ENCODE measurements at regions of chr9 and their contacts with region 1.

Region 1: DNA sequence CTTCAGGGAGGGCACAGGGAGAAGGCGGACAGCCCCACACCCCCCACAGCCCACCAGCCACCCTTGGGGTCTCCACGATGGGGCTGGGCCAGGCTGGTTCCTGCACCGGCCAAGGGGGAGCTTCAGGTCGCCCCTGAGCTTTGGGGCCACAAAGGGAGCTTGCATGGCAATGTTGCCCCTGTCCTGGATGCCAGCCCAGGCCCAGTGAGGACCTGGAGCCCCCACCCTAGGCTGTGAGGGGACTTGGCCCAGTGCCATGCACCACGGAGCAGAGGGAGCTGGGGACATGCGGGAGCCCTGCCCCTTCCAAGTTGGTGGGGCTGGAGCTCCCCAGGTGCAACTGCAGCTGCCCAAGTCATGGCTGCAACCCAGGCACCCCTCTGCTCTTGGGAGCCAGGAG is 18.4 kb downstream of the TMEM38B start:
- DNase-seq: no peak
- ATAC-seq: no peak
- H3K4me3 ChIP-seq: no peak overlapping the region
- H3K4me3 Mint-ChIP-seq: no peak overlapping the region
- H3K27ac ChIP-seq: no peak overlapping the region
- H3K27ac Mint-ChIP-seq: no peak overlapping the region
- H3K4me1 ChIP-seq: no peaks in the 10 kb centered on the region
- H3K4me1 Mint-ChIP-seq: peaks cover 11% of the 10 kb centered on the region
- H3K27me3 ChIP-seq: no peaks in the 10 kb centered on the region
- H3K27me3 Mint-ChIP-seq: no peaks in the 10 kb centered on the region
- CTCF ChIP-seq: no peak

Region 2: GRCh38 chr9:105432247-105432842 is 280.4 kb before region 1 on chr9:
- CTCF ChIA-PET with region 1: no interaction called
- POLR2A ChIA-PET with region 1: no interaction called
- intact Hi-C with region 1: loop called in 1 of 2 experiments (anchors 5 kb)
- DNase-seq: no peak
- ATAC-seq: no peak
- H3K4me3 ChIP-seq: no peak overlapping the region
- H3K4me3 Mint-ChIP-seq: no peak overlapping the region
- H3K27ac ChIP-seq: no peak overlapping the region
- H3K27ac Mint-ChIP-seq: no peak overlapping the region
- H3K4me1 ChIP-seq: no peaks in the 10 kb centered on the region
- H3K4me1 Mint-ChIP-seq: no peaks in the 10 kb centered on the region
- H3K27me3 ChIP-seq: peaks cover 0 to 2% of the 10 kb centered on the region in 2 experiments
- H3K27me3 Mint-ChIP-seq: peaks cover 6% of the 10 kb centered on the region
- CTCF ChIP-seq: no peak

Region 3: GRCh38 chr9:105670315-105670714 is 42.5 kb before region 1 on chr9:
- CTCF ChIA-PET with region 1: no interaction called
- POLR2A ChIA-PET with region 1: no interaction called
- intact Hi-C with region 1: loop called in 1 of 2 experiments (anchors 2 kb)
- DNase-seq: no peak
- ATAC-seq: no peak
- H3K4me3 ChIP-seq: no peak overlapping the region
- H3K4me3 Mint-ChIP-seq: no peak overlapping the region
- H3K27ac ChIP-seq: no peak overlapping the region
- H3K27ac Mint-ChIP-seq: no peak overlapping the region
- H3K4me1 ChIP-seq: no peaks in the 10 kb centered on the region
- H3K4me1 Mint-ChIP-seq: no peaks in the 10 kb centered on the region
- H3K27me3 ChIP-seq: no peaks in the 10 kb centered on the region
- H3K27me3 Mint-ChIP-seq: peaks cover 10% of the 10 kb centered on the region
- CTCF ChIP-seq: no peak

Region 4: GRCh38 chr9:105700668-105701067 is 12.1 kb before region 1 on chr9:
- CTCF ChIA-PET with region 1: no interaction called
- POLR2A ChIA-PET with region 1: no interaction called
- intact Hi-C with region 1: no loop called
- DNase-seq: no peak
- ATAC-seq: no peak
- H3K4me3 ChIP-seq: no peak overlapping the region
- H3K4me3 Mint-ChIP-seq: no peak overlapping the region
- H3K27ac ChIP-seq: no peak overlapping the region
- H3K27ac Mint-ChIP-seq: no peak overlapping the region
- H3K4me1 ChIP-seq: no peaks in the 10 kb centered on the region
- H3K4me1 Mint-ChIP-seq: peaks cover 44% of the 10 kb centered on the region
- H3K27me3 ChIP-seq: no peaks in the 10 kb centered on the region
- H3K27me3 Mint-ChIP-seq: no peaks in the 10 kb centered on the region
- CTCF ChIP-seq: no peak

Measured in CD4-positive, alpha-beta T cell (primary cell).